K562 (cell line): ENCODE measurements at regions of chr11 and their contacts with region 1.

Region 1: DNA sequence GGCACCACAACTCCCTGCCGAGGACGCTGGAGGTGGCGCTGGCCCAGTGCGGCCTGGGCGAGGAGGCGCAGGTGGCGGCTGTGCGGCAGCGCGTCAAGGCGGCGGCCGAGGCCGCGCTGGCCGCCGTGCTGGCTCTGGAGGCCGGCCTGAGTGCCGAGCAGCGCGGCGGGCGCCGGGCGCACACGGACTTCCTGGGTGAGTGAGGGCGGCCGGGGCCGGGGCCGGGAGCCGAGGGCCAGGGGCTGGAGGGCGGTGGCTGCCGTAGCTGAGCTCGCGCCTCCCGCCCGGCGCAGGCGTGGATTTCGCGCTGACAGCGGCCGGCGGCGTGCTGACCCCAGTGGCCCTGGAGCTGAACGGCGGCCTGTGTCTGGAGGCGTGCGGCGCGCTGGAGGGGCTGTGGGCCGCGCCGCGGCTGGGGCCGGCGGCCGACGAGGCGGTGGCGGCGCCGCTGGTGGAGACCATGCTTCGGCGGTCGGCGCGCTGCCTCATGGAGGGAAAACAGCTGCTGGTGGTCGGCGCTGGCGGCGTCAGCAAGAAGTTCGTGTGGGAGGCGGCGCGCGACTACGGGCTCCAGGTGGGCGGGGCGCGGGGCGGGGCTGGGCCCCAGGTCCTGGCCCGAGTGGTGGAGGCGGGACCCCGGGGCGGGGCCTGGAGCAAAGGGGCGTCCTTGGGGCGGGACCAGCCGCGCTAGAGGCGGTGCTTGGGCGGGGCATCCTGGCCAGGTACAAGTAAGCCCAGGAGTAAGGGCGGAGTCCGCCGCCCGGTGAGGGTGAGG is 5.4 kb downstream of the CARNS1 start:
- DNase-seq: peak; percentile 97 to 99 (median 99)
- ATAC-seq: peak; percentile 96
- H3K4me3 ChIP-seq: peak overlapping the region; percentile 62
- H3K27ac ChIP-seq: peak overlapping the region; percentile 94
- H3K4me1 ChIP-seq: peaks cover 6 to 69% of the 10 kb centered on the region in 2 experiments
- H3K27me3 ChIP-seq: no peaks in the 10 kb centered on the region
- CTCF ChIP-seq: 0 out of 6 replicates have a peak, but pooled peaks of 1 of the 3 experiments have one; percentile 4
- EP300 ChIP-seq: no peak
- POLR2A ChIP-seq: no peak; the same call in 1 of the 2 replicates
- RAD21 ChIP-seq: 0 out of 4 replicates have a peak, but pooled peaks of 1 of the 2 experiments have one; percentile 9

Region 2: GRCh38 chr11:66906061-66906735 is 514.6 kb before region 1 on chr11:
- CTCF ChIA-PET with region 1: no interaction called
- POLR2A ChIA-PET with region 1: no interaction called
- in situ Hi-C with region 1: no loop called
- intact Hi-C with region 1: no loop called
- DNase-seq: no peak
- ATAC-seq: no peak
- H3K4me3 ChIP-seq: no peak overlapping the region
- H3K27ac ChIP-seq: no peak overlapping the region; the same call in 2 of the 3 replicates
- H3K4me1 ChIP-seq: peaks cover 16 to 24% of the 10 kb centered on the region in 2 experiments
- H3K27me3 ChIP-seq: no peaks in the 10 kb centered on the region
- CTCF ChIP-seq: no peak
- EP300 ChIP-seq: no peak
- POLR2A ChIP-seq: no peak
- RAD21 ChIP-seq: no peak

Region 3: GRCh38 chr11:67321313-67321871 is 99.4 kb before region 1 on chr11:
- CTCF ChIA-PET with region 1: no interaction called
- POLR2A ChIA-PET with region 1: no interaction called
- in situ Hi-C with region 1: no loop called
- intact Hi-C with region 1: no loop called
- DNase-seq: peak in 2 of 4 experiments; percentile 2 to 5
- ATAC-seq: no peak
- H3K4me3 ChIP-seq: no peak overlapping the region
- H3K27ac ChIP-seq: no peak overlapping the region
- H3K4me1 ChIP-seq: peaks cover 14 to 19% of the 10 kb centered on the region in 2 experiments; a peak in 4 of 5 replicates
- H3K27me3 ChIP-seq: no peaks in the 10 kb centered on the region
- CTCF ChIP-seq: no peak
- EP300 ChIP-seq: no peak
- POLR2A ChIP-seq: no peak
- RAD21 ChIP-seq: no peak

Region 4: GRCh38 chr11:67468835-67469811 is 48.3 kb after region 1 on chr11 and contains the start of gene TMEM134:
- CTCF ChIA-PET with region 1: interaction called, 4 read pairs
- POLR2A ChIA-PET with region 1: no interaction called
- in situ Hi-C with region 1: no loop called
- intact Hi-C with region 1: loop called (anchors 5 kb)
- DNase-seq: peak; percentile 92 to 96 (median 94)
- ATAC-seq: peak; percentile 87
- H3K4me3 ChIP-seq: peak within 1 kb of the TSS; percentile 76
- H3K27ac ChIP-seq: peak within 1 kb of the TSS; percentile 72
- H3K4me1 ChIP-seq: peaks cover 9 to 41% of the 10 kb centered on the region in 2 experiments; a peak in 4 of 5 replicates
- H3K27me3 ChIP-seq: no peaks in the 10 kb centered on the region
- CTCF ChIP-seq: peak; percentile 60 to 84 (median 75)
- EP300 ChIP-seq: no peak
- POLR2A ChIP-seq: peak; percentile 82
- RAD21 ChIP-seq: peak; percentile 54 to 76
- polyA plus RNA-seq, gene TMEM134: 0.63 to 1.4 TPM